ENCODE measurements at regions of chr4 and their contacts with region 1.

Region 1: DNA sequence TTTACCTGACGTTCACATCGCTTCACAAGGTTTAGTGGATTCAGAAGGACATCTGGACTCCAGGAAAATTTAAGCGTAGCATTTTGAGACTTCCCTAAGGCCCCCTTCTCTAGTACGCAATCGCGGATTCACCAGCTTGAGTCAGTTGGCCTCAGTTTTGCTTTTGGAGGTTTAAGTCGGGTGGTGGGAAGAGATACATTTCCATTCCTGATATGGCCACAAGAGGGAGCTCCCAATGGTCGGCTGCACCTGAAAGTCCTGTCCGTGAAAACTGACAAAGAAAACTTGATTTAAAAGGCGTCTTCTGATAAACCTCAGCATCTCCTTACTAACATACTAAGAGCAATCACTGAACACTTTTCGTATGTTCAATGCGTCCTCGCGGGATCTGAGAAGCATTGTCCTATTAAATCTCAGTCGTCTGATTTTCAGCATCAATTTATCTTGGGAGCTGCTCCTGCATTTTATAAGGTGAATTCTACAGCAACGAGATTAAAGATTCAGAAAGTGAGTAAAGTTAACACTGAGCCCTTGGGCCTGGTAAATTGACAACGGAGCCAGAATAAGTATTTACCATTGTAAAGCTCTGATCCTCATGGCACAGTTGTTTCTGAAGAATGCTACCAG is 50.6 kb downstream of the LGI2 start:
- DNase-seq: peak; percentile 61
- H3K4me3 ChIP-seq: no peak overlapping the region
- H3K27ac ChIP-seq: peak overlapping the region; percentile 12
- H3K4me1 ChIP-seq: no peaks in the 10 kb centered on the region
- H3K27me3 ChIP-seq: no peaks in the 10 kb centered on the region
- CTCF ChIP-seq: peak; percentile 87

Region 2: DNA sequence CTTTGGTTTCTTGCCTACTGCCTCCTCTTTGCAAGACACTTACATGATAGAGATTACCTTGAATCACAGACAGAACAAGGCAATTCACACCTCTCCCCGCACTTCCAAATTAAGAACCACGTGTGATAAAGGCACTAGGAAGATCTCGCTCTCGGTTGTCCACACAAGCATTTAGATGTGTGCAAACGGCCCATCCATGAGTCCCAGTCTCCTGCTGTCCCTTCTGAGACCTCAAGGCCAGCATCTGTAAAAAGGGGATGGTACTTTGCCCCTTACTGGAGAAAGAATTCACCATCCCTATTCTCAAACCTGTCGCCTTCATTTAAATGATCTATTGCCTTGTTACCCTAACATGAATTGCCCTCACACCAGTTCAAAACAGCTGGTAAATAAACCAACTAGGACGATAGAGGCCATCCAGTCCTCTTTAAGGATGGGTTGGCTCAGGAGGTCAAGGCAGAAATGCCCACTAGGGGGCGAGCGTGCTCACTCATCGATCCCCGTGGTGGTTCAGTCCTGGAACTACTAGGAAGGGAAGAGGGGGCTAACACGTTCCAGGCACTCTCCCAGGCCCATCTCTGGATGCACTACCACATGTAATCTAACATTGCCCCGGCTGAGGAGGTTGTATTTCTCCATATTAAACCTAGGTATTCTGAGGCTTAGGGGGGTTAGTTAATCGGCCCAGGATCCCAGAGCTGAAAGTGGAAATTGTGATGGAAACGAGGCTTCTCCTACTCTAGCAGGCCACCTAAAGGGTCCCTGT is 491.6 kb before region 1 on chr4:
- intact Hi-C with region 1: loop called (anchors 10 kb)
- DNase-seq: peak; percentile 82
- H3K4me3 ChIP-seq: no peak overlapping the region
- H3K27ac ChIP-seq: no peak overlapping the region
- H3K4me1 ChIP-seq: no peaks in the 10 kb centered on the region
- H3K27me3 ChIP-seq: no peaks in the 10 kb centered on the region
- CTCF ChIP-seq: peak; percentile 86

Region 3: GRCh38 chr4:24701683-24702082 is 278.5 kb before region 1 on chr4:
- intact Hi-C with region 1: no loop called
- DNase-seq: no peak
- H3K4me3 ChIP-seq: no peak overlapping the region
- H3K27ac ChIP-seq: no peak overlapping the region
- H3K4me1 ChIP-seq: no peaks in the 10 kb centered on the region
- H3K27me3 ChIP-seq: no peaks in the 10 kb centered on the region
- CTCF ChIP-seq: no peak

Region 4: GRCh38 chr4:24770032-24770584 is 210.1 kb before region 1 on chr4:
- intact Hi-C with region 1: no loop called
- DNase-seq: no peak
- H3K4me3 ChIP-seq: no peak overlapping the region
- H3K27ac ChIP-seq: no peak overlapping the region
- H3K4me1 ChIP-seq: no peaks in the 10 kb centered on the region
- H3K27me3 ChIP-seq: no peaks in the 10 kb centered on the region
- CTCF ChIP-seq: no peak

Region 5: GRCh38 chr4:25144870-25145481 is 164.8 kb after region 1 on chr4:
- intact Hi-C with region 1: loop called (anchors 5 kb)
- DNase-seq: no peak
- H3K4me3 ChIP-seq: no peak overlapping the region
- H3K27ac ChIP-seq: no peak overlapping the region
- H3K4me1 ChIP-seq: no peaks in the 10 kb centered on the region
- H3K27me3 ChIP-seq: no peaks in the 10 kb centered on the region
- CTCF ChIP-seq: peak; percentile 40

Region 6: GRCh38 chr4:25367004-25367621 is 386.9 kb after region 1 on chr4:
- intact Hi-C with region 1: loop called (anchors 10 kb)
- DNase-seq: no peak
- H3K4me3 ChIP-seq: no peak overlapping the region
- H3K27ac ChIP-seq: no peak overlapping the region
- H3K4me1 ChIP-seq: no peaks in the 10 kb centered on the region
- H3K27me3 ChIP-seq: no peaks in the 10 kb centered on the region
- CTCF ChIP-seq: peak; percentile 44

Measured in colonic mucosa (tissue), 4 donors.